Activated CD4-positive, alpha-beta memory T cell treated with anti-CD3 and anti-CD28 coated beads for 36 hours (primary cell): ENCODE measurements at regions of chr3 and their contacts with region 1.

Region 1: GRCh38 chr3:18988614-18989229 is 159.6 kb upstream of the KCNH8 start:
- DNase-seq: no peak
- H3K4me3 Mint-ChIP-seq: no peak overlapping the region
- H3K27ac Mint-ChIP-seq: no peak overlapping the region
- H3K4me1 Mint-ChIP-seq: peaks cover 15% of the 10 kb centered on the region
- H3K27me3 Mint-ChIP-seq: peaks cover 25% of the 10 kb centered on the region

Region 2: GRCh38 chr3:18424729-18425640 is 563.7 kb before region 1 on chr3 and contains the start of gene SATB1:
- CTCF ChIA-PET with region 1: no interaction called
- POLR2A ChIA-PET with region 1: no interaction called
- intact Hi-C with region 1: loop called (anchors 10 kb)
- DNase-seq: peak; percentile 78
- H3K4me3 Mint-ChIP-seq: peak within 1 kb of the TSS; percentile 86
- H3K27ac Mint-ChIP-seq: peak within 1 kb of the TSS; percentile 84
- H3K4me1 Mint-ChIP-seq: peaks cover 74% of the 10 kb centered on the region
- H3K27me3 Mint-ChIP-seq: no peaks in the 10 kb centered on the region
- total RNA-seq, gene SATB1: 546 to 561 TPM

Region 3: DNA sequence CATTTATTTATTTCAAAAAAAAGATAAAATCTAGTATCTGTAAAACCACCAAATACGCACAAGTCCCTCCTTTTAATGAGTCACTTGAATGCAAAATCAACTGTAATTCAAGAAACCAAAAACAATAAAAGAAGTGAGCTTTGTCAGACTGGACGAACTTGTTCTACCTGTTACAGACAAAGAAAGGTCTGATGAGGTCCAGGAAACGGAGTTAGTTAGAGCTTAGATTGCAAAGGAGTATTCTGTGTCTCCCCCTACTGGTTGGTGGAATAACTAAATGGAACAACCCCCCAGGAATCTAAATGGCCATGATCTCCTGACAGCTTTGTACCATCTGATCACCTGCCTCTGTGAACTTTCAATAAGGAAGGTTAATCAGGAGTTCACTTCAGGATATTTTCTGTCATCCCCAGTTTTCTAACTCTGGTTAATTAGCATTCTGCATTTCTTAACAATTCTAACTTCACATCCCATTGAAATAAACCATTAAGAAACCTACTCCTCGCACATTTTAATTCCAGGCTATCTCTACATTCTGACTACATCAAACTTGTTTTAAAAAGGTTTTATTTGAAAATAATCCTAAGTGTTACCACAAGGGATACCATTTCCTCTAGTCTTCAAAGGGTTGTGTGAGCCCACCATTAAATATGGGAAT is 230.5 kb before region 1 on chr3:
- CTCF ChIA-PET with region 1: interaction called, 4 read pairs
- POLR2A ChIA-PET with region 1: no interaction called
- intact Hi-C with region 1: loop called (anchors 1 kb)
- DNase-seq: no peak
- H3K4me3 Mint-ChIP-seq: no peak overlapping the region
- H3K27ac Mint-ChIP-seq: peak overlapping the region; percentile 78
- H3K4me1 Mint-ChIP-seq: peaks cover 39% of the 10 kb centered on the region
- H3K27me3 Mint-ChIP-seq: no peaks in the 10 kb centered on the region

Region 4: DNA sequence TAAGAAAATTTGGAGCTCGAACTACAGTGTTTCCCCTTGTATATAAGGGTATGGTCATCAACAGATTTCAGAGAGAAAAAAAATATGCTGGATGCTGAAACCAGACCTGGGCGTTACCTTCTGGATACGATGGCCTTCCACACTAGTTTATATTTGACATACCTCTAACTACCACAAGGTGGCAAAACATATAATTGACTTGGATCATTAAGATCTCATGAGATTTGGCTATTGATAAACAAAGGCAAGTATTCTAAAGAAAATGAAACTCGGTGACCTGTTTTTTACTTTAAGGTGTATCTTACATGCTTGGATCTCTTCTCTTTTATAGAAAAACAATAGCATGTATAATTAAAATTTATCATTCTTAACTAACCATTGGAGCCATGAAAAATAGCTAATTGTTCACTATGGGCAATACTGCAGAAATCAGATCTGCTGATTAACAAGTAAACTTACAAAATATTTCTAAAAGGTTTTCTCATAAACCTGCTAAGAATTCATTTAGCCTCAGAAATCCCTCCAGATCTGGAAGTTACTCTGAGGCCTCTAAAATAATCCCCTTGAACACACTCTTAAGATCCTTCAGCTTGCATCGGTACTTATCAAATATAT is 141.0 kb before region 1 on chr3:
- CTCF ChIA-PET with region 1: interaction called, 33 read pairs
- POLR2A ChIA-PET with region 1: no interaction called
- intact Hi-C with region 1: loop called (anchors 1 kb)
- DNase-seq: no peak
- H3K4me3 Mint-ChIP-seq: no peak overlapping the region
- H3K27ac Mint-ChIP-seq: no peak overlapping the region
- H3K4me1 Mint-ChIP-seq: peaks cover 9% of the 10 kb centered on the region
- H3K27me3 Mint-ChIP-seq: peaks cover 3% of the 10 kb centered on the region

Region 5: DNA sequence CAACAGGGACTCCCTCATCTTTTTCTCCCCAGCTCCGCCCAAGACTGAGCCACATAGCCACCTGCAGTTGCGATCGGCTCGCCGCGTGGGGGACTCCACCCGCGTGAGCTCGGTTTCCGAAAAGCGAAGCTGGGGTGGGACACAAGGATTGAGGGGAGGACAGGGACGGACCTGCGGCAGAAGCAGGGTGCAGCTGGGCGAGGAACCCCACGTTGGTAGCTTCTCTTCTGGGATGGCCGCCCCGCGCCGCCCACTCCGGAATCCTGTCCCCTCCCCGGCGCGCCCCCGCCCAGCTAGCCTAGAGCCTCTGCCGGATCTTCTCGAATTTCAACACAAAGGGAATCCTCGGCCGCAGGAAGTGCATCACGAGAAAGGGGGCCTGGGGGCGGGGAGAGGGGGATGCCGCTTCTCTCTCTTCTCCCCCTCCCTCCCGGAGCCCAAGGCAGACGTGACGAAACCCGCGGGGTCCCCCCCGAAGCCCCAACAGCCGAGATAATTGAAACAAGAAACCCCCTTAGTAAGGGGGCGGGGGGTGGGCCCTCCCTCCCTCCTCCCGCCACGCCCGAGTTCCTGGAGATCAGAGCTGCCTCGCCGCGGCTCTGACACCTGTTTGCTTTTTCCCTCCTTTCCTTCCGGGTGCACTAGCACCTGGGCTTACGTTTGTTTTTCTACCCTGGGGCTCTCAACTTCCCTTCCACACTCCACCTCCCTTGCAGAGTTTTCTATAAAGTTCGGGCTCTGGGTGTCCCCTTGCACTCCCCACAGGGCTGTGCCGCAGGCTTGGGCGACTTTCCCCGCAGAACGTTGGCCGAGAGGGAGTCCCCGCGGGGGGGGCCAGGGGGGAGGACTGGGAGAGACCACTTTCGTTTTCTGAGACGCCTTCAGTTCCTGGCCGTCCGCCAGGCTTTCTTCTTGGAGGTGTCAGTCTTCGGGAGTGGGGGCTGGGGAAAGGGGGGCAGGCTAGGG is 158.2 kb after region 1 on chr3:
- CTCF ChIA-PET with region 1: no interaction called
- POLR2A ChIA-PET with region 1: no interaction called
- intact Hi-C with region 1: loop called (anchors 5 kb)
- DNase-seq: peak; percentile 69
- H3K4me3 Mint-ChIP-seq: peak overlapping the region; percentile 76
- H3K27ac Mint-ChIP-seq: no peak overlapping the region
- H3K4me1 Mint-ChIP-seq: peaks cover 12% of the 10 kb centered on the region
- H3K27me3 Mint-ChIP-seq: peaks cover 14% of the 10 kb centered on the region